ENCODE measurements at regions of chr15 and their contacts with region 1.

Region 1: GRCh38 chr15:56918046-56918938 is at the start of gene TCF12:
- DNase-seq: peak; percentile 97
- ATAC-seq: peak; percentile 97
- total RNA-seq, gene TCF12: 48.4 TPM

Region 2: DNA sequence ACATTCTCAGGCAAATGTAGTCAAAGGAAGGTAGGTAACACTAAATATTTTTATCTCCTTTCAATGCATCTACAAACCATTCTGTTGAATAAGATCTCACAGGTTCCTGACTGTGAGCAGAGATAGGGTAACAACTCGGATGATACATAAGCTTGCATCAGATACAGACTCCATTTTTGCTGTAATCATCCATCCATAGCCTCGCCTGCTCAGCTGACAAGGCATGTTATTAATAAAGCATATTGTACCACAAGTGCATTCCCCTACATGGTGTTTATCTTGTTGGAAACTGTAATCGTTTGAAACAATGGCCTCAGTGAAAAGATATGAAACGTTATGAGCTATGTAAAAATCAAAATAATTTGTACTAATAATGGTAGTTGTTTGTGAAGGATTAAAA is 35.2 kb before region 1 on chr15:
- intact Hi-C with region 1: loop called (anchors 5 kb)
- DNase-seq: no peak
- ATAC-seq: no peak

Measured in left ventricle myocardium superior (tissue), 1 donor.